CD4-positive, alpha-beta memory T cell (primary cell): ENCODE measurements at regions of chr6 and their contacts with region 1.

Region 1: GRCh38 chr6:54706844-54707605 is 139.5 kb upstream of the FAM83B start:
- DNase-seq: no peak
- H3K4me3 ChIP-seq: no peak overlapping the region
- H3K4me3 Mint-ChIP-seq: no peak overlapping the region
- H3K27ac ChIP-seq: no peak overlapping the region
- H3K27ac Mint-ChIP-seq: no peak overlapping the region
- H3K4me1 ChIP-seq: no peaks in the 10 kb centered on the region
- H3K4me1 Mint-ChIP-seq: no peaks in the 10 kb centered on the region
- H3K27me3 ChIP-seq: no peaks in the 10 kb centered on the region
- H3K27me3 Mint-ChIP-seq: no peaks in the 10 kb centered on the region

Region 2: GRCh38 chr6:54595844-54596243 is 111.2 kb before region 1 on chr6:
- CTCF ChIA-PET with region 1: no interaction called
- POLR2A ChIA-PET with region 1: no interaction called
- intact Hi-C with region 1: no loop called
- DNase-seq: no peak
- H3K4me3 ChIP-seq: no peak overlapping the region
- H3K4me3 Mint-ChIP-seq: no peak overlapping the region
- H3K27ac ChIP-seq: no peak overlapping the region
- H3K27ac Mint-ChIP-seq: no peak overlapping the region
- H3K4me1 ChIP-seq: no peaks in the 10 kb centered on the region
- H3K4me1 Mint-ChIP-seq: no peaks in the 10 kb centered on the region
- H3K27me3 ChIP-seq: no peaks in the 10 kb centered on the region
- H3K27me3 Mint-ChIP-seq: no peaks in the 10 kb centered on the region

Region 3: DNA sequence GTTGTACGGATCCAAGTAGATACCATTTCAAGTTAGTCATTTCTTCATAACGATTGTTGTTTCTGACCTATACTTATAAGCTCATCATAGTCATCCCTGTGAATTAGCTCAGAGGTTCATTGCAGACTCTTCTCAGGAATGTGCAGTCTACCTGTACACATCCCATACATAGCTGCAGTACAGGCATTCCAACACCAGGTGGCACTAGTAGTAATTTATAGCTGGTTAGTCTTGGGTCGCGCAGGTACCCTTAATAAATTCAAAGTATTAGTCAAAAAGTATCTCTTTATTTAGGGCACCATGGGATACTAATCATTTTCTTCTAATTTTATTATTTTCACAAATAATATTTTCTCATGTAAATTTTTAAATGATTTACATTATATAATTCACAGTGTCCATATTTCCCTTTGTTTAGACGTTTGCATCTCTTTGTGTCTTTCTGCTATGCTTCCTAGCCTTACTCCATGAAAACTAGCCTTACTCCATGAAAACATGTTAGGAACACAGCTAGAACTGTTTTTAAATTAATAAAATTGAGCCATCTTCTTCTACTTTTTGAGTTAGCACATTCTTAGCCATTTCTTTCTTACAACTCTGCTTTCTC is 10.9 kb after region 1 on chr6:
- CTCF ChIA-PET with region 1: interaction called, 41 read pairs
- POLR2A ChIA-PET with region 1: no interaction called
- intact Hi-C with region 1: no loop called
- DNase-seq: peak; percentile 9 to 38 (median 17)
- H3K4me3 ChIP-seq: no peak overlapping the region
- H3K4me3 Mint-ChIP-seq: no peak overlapping the region
- H3K27ac ChIP-seq: no peak overlapping the region
- H3K27ac Mint-ChIP-seq: no peak overlapping the region
- H3K4me1 ChIP-seq: no peaks in the 10 kb centered on the region
- H3K4me1 Mint-ChIP-seq: no peaks in the 10 kb centered on the region
- H3K27me3 ChIP-seq: no peaks in the 10 kb centered on the region
- H3K27me3 Mint-ChIP-seq: no peaks in the 10 kb centered on the region

Region 4: DNA sequence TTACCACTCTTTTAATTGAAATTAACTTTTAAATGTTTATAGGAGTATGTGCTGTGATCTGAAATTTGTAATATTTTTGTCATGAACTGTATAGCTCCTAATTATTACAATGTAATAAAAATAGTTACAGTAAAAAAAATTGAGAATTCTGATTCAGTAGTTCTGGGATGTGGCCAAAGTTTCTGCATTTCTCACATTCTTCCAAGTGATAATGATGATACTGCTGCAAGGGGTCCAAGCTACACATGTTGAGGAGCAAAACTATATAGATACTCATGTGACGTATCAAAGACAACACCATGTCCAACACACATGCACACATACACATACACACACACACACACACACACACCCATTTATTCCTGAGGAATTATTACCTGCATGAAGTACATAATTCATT is 68.6 kb after region 1 on chr6:
- CTCF ChIA-PET with region 1: no interaction called
- POLR2A ChIA-PET with region 1: no interaction called
- intact Hi-C with region 1: no loop called
- DNase-seq: no peak
- H3K4me3 ChIP-seq: no peak overlapping the region
- H3K4me3 Mint-ChIP-seq: no peak overlapping the region
- H3K27ac ChIP-seq: no peak overlapping the region
- H3K27ac Mint-ChIP-seq: no peak overlapping the region
- H3K4me1 ChIP-seq: no peaks in the 10 kb centered on the region
- H3K4me1 Mint-ChIP-seq: no peaks in the 10 kb centered on the region
- H3K27me3 ChIP-seq: no peaks in the 10 kb centered on the region
- H3K27me3 Mint-ChIP-seq: no peaks in the 10 kb centered on the region